AG04450 (cell line): ENCODE measurements at regions of chr5 and their contacts with region 1.

Region 1: GRCh38 chr5:132725745-132726144 is 11.6 kb downstream of the KIF3A start:
- DNase-seq: no peak
- H3K4me3 ChIP-seq: no peak overlapping the region
- H3K27ac ChIP-seq: no peak overlapping the region
- H3K27me3 ChIP-seq: no peaks in the 10 kb centered on the region
- CTCF ChIP-seq: no peak

Region 2: GRCh38 chr5:132714456-132715307 is 11.1 kb before region 1 on chr5:
- CTCF ChIA-PET with region 1: interaction called, 15 read pairs
- POLR2A ChIA-PET with region 1: no interaction called
- DNase-seq: no peak
- H3K4me3 ChIP-seq: no peak overlapping the region
- H3K27ac ChIP-seq: no peak overlapping the region
- H3K27me3 ChIP-seq: no peaks in the 10 kb centered on the region
- CTCF ChIP-seq: peak; percentile 47